ENCODE measurements at regions of chr4 and their contacts with region 1.

Region 1: GRCh38 chr4:121800961-121801714 is at the start of gene EXOSC9:
- DNase-seq: peak; percentile 92 to 98
- ATAC-seq: peak; percentile 87 to 88 (median 87)
- H3K4me3 ChIP-seq: peak within 1 kb of the TSS; percentile 99
- H3K4me3 Mint-ChIP-seq: peak within 1 kb of the TSS; percentile 93
- H3K27ac ChIP-seq: peak within 1 kb of the TSS; percentile 85
- H3K27ac Mint-ChIP-seq: peak within 1 kb of the TSS; percentile 95 to 98
- H3K4me1 ChIP-seq: peaks cover 8% of the 10 kb centered on the region
- H3K4me1 Mint-ChIP-seq: peaks cover 29 to 32% of the 10 kb centered on the region in 2 donors
- H3K27me3 ChIP-seq: no peaks in the 10 kb centered on the region
- H3K27me3 Mint-ChIP-seq: peaks cover 0 to 4% of the 10 kb centered on the region in 2 donors
- CTCF ChIP-seq: no peak
- total RNA-seq, gene EXOSC9: 45.7 to 57.4 (median 51.2) TPM

Region 2: GRCh38 chr4:121696581-121697461 is 104.3 kb before region 1 on chr4 and contains the start of gene ANXA5:
- intact Hi-C with region 1: loop called (anchors 5 kb)
- DNase-seq: peak; percentile 54 to 76
- ATAC-seq: peak; percentile 74 to 91 (median 75)
- H3K4me3 ChIP-seq: peak within 1 kb of the TSS; percentile 75
- H3K4me3 Mint-ChIP-seq: peak within 1 kb of the TSS; percentile 97
- H3K27ac ChIP-seq: peak within 1 kb of the TSS; percentile 64
- H3K27ac Mint-ChIP-seq: peak within 1 kb of the TSS; percentile 71 to 92
- H3K4me1 ChIP-seq: peaks cover 12% of the 10 kb centered on the region
- H3K4me1 Mint-ChIP-seq: peaks cover 27 to 31% of the 10 kb centered on the region in 2 donors
- H3K27me3 ChIP-seq: peaks cover 3% of the 10 kb centered on the region
- H3K27me3 Mint-ChIP-seq: peaks cover 44 to 46% of the 10 kb centered on the region in 2 donors
- CTCF ChIP-seq: no peak
- total RNA-seq, gene ANXA5: 24.9 to 74.4 (median 33.1) TPM

Region 3: DNA sequence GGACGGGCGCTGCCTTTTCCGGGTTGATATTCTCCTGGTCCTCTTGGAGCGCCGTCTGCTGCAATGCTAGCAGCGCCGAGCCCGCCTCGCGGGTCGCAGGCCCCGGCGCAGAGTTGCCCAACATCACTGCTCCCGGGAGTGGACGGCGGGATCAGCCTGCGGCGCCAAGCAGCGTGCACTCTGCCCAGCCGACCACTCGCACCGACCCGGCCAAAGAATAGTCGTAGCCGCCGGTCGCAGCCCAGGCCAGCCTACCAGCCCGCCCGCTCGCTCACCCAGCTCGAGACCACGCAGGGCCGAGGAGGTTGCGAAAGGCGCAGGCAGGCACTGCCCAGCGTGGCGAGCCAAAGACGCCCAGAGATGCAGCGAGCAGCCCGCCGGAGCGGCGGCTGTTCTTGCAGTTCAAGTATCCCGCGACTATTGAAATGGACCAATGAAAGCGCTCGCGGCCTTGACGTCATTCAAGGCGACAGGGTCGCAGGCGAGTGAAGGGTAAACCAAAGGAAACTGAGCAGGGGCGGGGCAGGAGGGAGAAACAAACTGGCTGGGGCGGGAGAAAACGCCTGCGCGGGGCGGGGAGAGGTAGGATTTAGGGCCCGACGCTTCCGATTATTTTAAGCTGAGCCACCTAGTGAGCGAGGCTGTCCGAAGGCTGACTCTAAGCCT is 22.5 kb after region 1 on chr4 and contains the start of gene CCNA2:
- intact Hi-C with region 1: loop called (anchors 1 kb)
- DNase-seq: peak; percentile 93 to 96
- ATAC-seq: peak; percentile 98 to 99 (median 98)
- H3K4me3 ChIP-seq: peak within 1 kb of the TSS; percentile 67
- H3K4me3 Mint-ChIP-seq: peak within 1 kb of the TSS; percentile 91
- H3K27ac ChIP-seq: peak within 1 kb of the TSS; percentile 74
- H3K27ac Mint-ChIP-seq: peak within 1 kb of the TSS; percentile 86 to 87
- H3K4me1 ChIP-seq: peaks cover 9% of the 10 kb centered on the region
- H3K4me1 Mint-ChIP-seq: peaks cover 13 to 15% of the 10 kb centered on the region in 2 donors
- H3K27me3 ChIP-seq: no peaks in the 10 kb centered on the region
- H3K27me3 Mint-ChIP-seq: no peaks in the 10 kb centered on the region
- CTCF ChIP-seq: no peak
- total RNA-seq, gene CCNA2: 0.50 to 1.6 (median 0.99) TPM

Region 4: GRCh38 chr4:121869841-121870656 is 68.9 kb after region 1 on chr4 and contains the start of gene BBS7:
- intact Hi-C with region 1: loop called (anchors 2 kb)
- DNase-seq: peak; percentile 88 to 97
- ATAC-seq: peak; percentile 97 to 99 (median 98)
- H3K4me3 ChIP-seq: peak within 1 kb of the TSS; percentile 91
- H3K4me3 Mint-ChIP-seq: peak within 1 kb of the TSS; percentile 97
- H3K27ac ChIP-seq: peak within 1 kb of the TSS; percentile 77
- H3K27ac Mint-ChIP-seq: peak within 1 kb of the TSS; percentile 83 to 93
- H3K4me1 ChIP-seq: peaks cover 8% of the 10 kb centered on the region
- H3K4me1 Mint-ChIP-seq: peaks cover 14 to 18% of the 10 kb centered on the region in 2 donors
- H3K27me3 ChIP-seq: no peaks in the 10 kb centered on the region
- H3K27me3 Mint-ChIP-seq: peaks cover 7 to 24% of the 10 kb centered on the region in 2 donors
- CTCF ChIP-seq: no peak
- total RNA-seq, gene BBS7: 3.6 to 7.5 (median 4.9) TPM

Region 5: GRCh38 chr4:122229857-122230256 is 428.7 kb after region 1 on chr4:
- intact Hi-C with region 1: no loop called
- DNase-seq: no peak
- ATAC-seq: no peak
- H3K4me3 ChIP-seq: no peak overlapping the region
- H3K4me3 Mint-ChIP-seq: no peak overlapping the region
- H3K27ac ChIP-seq: no peak overlapping the region
- H3K27ac Mint-ChIP-seq: peak overlapping the region in 1 of 2 donors; percentile 62
- H3K4me1 ChIP-seq: no peaks in the 10 kb centered on the region
- H3K4me1 Mint-ChIP-seq: peaks cover 5 to 7% of the 10 kb centered on the region in 2 donors
- H3K27me3 ChIP-seq: no peaks in the 10 kb centered on the region
- H3K27me3 Mint-ChIP-seq: no peaks in the 10 kb centered on the region
- CTCF ChIP-seq: no peak